CD4-positive, alpha-beta T cell (primary cell): ENCODE measurements at regions of chr2 and their contacts with region 1.

Region 1: GRCh38 chr2:73385595-73386341 is at the start of gene ALMS1:
- DNase-seq: peak; percentile 73 to 97 (median 86)
- ATAC-seq: peak; percentile 90
- H3K4me3 ChIP-seq: peak within 1 kb of the TSS; percentile 78
- H3K4me3 Mint-ChIP-seq: peak within 1 kb of the TSS; percentile 92
- H3K27ac ChIP-seq: peak within 1 kb of the TSS; percentile 75 to 78
- H3K27ac Mint-ChIP-seq: peak within 1 kb of the TSS; percentile 97
- H3K4me1 ChIP-seq: peaks cover 20% of the 10 kb centered on the region
- H3K4me1 Mint-ChIP-seq: peaks cover 45% of the 10 kb centered on the region
- H3K27me3 ChIP-seq: no peaks in the 10 kb centered on the region
- H3K27me3 Mint-ChIP-seq: no peaks in the 10 kb centered on the region
- CTCF ChIP-seq: no peak
- total RNA-seq, gene ALMS1: 20.2 to 20.6 TPM

Region 2: GRCh38 chr2:73112913-73113633 is 272.7 kb before region 1 on chr2 and contains the start of gene RAB11FIP5:
- CTCF ChIA-PET with region 1: no interaction called
- POLR2A ChIA-PET with region 1: no interaction called
- intact Hi-C with region 1: loop called in 1 of 2 experiments (anchors 5 kb)
- DNase-seq: peak; percentile 58 to 93 (median 75)
- ATAC-seq: peak; percentile 90
- H3K4me3 ChIP-seq: peak within 1 kb of the TSS; percentile 84
- H3K4me3 Mint-ChIP-seq: peak within 1 kb of the TSS; percentile 86
- H3K27ac ChIP-seq: peak within 1 kb of the TSS in 1 of 2 donors; percentile 21
- H3K27ac Mint-ChIP-seq: peak within 1 kb of the TSS; percentile 65
- H3K4me1 ChIP-seq: peaks cover 35% of the 10 kb centered on the region
- H3K4me1 Mint-ChIP-seq: peaks cover 27% of the 10 kb centered on the region
- H3K27me3 ChIP-seq: no peaks in the 10 kb centered on the region
- H3K27me3 Mint-ChIP-seq: no peaks in the 10 kb centered on the region
- CTCF ChIP-seq: no peak
- total RNA-seq, gene RAB11FIP5: 12.6 to 13.8 TPM

Region 3: DNA sequence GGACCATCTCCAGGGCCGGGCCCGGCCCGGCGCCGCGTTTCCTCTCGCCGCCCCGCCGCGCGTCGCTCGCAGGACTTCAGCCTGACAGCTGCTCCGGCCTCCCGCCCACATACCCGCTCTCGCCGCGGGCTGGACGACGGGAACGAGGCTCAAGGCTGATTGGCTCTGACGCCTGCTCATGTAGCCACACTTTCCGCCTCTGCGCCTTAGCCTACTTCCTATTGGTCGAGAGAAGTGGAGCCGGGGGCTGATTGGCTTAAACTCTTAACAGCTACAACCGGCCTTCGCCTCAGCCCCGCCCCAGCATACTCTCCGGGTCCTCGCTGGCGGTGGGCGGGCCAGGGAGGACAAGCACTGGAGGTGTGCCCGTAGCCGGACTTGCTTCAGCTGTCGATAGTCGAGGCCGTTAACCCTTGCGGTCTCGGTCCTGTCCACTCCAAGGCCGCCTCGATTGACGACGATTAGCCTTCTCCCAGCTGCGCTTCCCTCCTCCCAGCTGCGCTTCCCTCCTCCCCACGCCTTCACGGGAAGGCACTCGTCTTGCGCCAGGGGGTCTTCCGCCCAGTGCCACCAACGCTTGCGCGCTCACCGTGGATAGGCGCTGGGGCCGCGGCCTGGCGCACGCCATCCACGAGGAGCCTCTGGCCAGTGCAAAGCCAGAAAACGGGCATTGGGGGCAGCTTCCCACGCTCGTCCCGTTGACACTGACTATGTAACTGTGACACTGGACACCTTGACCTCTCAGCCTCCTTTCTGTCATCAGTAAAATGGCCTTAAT is 152.4 kb before region 1 on chr2 and contains the start of gene PRADC1:
- CTCF ChIA-PET with region 1: interaction called, 3 read pairs
- POLR2A ChIA-PET with region 1: interaction called, 37 read pairs
- intact Hi-C with region 1: loop called (anchors 1 to 10 kb)
- DNase-seq: peak; percentile 84 to 98 (median 90)
- ATAC-seq: peak; percentile 77
- H3K4me3 ChIP-seq: peak within 1 kb of the TSS; percentile 98
- H3K4me3 Mint-ChIP-seq: peak within 1 kb of the TSS; percentile 96
- H3K27ac ChIP-seq: peak within 1 kb of the TSS; percentile 82 to 90
- H3K27ac Mint-ChIP-seq: peak within 1 kb of the TSS; percentile 98
- H3K4me1 ChIP-seq: peaks cover 39% of the 10 kb centered on the region
- H3K4me1 Mint-ChIP-seq: peaks cover 50% of the 10 kb centered on the region
- H3K27me3 ChIP-seq: no peaks in the 10 kb centered on the region
- H3K27me3 Mint-ChIP-seq: no peaks in the 10 kb centered on the region
- CTCF ChIP-seq: no peak
- total RNA-seq, gene PRADC1: 2.9 to 3.0 TPM

Region 4: GRCh38 chr2:73337828-73338227 is 47.9 kb before region 1 on chr2:
- CTCF ChIA-PET with region 1: no interaction called
- POLR2A ChIA-PET with region 1: no interaction called
- intact Hi-C with region 1: no loop called
- DNase-seq: no peak
- ATAC-seq: no peak
- H3K4me3 ChIP-seq: no peak overlapping the region
- H3K4me3 Mint-ChIP-seq: no peak overlapping the region
- H3K27ac ChIP-seq: no peak overlapping the region
- H3K27ac Mint-ChIP-seq: no peak overlapping the region
- H3K4me1 ChIP-seq: no peaks in the 10 kb centered on the region
- H3K4me1 Mint-ChIP-seq: no peaks in the 10 kb centered on the region
- H3K27me3 ChIP-seq: peaks cover 0 to 3% of the 10 kb centered on the region in 2 experiments
- H3K27me3 Mint-ChIP-seq: peaks cover 8% of the 10 kb centered on the region
- CTCF ChIP-seq: no peak

Region 5: DNA sequence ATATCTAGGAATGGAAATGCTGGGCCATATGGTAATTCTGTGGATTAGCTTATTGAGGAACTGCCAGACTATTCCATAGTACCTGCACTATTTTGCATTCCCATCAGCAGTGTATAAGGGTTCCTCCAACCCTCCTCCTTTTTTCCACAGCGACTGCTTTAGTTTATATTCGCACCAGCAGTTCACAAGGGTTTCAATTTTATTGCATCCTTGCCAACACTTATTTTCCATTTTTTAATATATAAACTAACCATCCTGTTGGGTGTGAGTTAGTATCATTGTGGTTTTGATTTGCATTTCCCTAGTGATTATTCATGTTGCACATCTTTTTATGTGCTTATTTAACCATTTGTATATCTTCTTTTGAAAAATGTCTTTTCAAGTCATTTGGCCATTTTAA is 189.5 kb after region 1 on chr2:
- CTCF ChIA-PET with region 1: no interaction called
- POLR2A ChIA-PET with region 1: no interaction called
- intact Hi-C with region 1: no loop called
- DNase-seq: no peak
- ATAC-seq: no peak
- H3K4me3 ChIP-seq: no peak overlapping the region
- H3K4me3 Mint-ChIP-seq: no peak overlapping the region
- H3K27ac ChIP-seq: no peak overlapping the region
- H3K27ac Mint-ChIP-seq: no peak overlapping the region
- H3K4me1 ChIP-seq: no peaks in the 10 kb centered on the region
- H3K4me1 Mint-ChIP-seq: no peaks in the 10 kb centered on the region
- H3K27me3 ChIP-seq: no peaks in the 10 kb centered on the region
- H3K27me3 Mint-ChIP-seq: no peaks in the 10 kb centered on the region
- CTCF ChIP-seq: no peak

Region 6: DNA sequence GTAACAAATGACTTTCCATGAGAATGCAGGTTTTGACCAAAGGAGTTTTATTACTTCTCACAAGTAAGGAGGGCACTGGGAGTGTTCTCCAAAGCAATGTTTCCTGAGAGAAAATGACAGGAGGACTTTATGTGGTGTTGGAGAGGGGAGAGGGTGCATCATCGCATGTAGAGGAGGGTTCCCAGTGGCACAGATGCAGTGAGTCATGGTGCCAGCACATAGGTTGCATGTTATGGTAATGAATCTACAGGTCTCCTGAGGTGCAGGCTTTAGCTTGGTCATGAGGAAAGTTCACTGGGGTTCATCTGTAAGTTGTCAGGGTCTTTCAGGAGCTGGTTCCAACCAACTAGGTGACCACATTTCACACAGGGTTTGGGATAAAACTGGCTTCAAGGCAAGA is 226.1 kb after region 1 on chr2:
- CTCF ChIA-PET with region 1: no interaction called
- POLR2A ChIA-PET with region 1: no interaction called
- intact Hi-C with region 1: no loop called
- DNase-seq: no peak
- ATAC-seq: no peak
- H3K4me3 ChIP-seq: no peak overlapping the region
- H3K4me3 Mint-ChIP-seq: no peak overlapping the region
- H3K27ac ChIP-seq: no peak overlapping the region
- H3K27ac Mint-ChIP-seq: no peak overlapping the region
- H3K4me1 ChIP-seq: no peaks in the 10 kb centered on the region
- H3K4me1 Mint-ChIP-seq: no peaks in the 10 kb centered on the region
- H3K27me3 ChIP-seq: no peaks in the 10 kb centered on the region
- H3K27me3 Mint-ChIP-seq: no peaks in the 10 kb centered on the region
- CTCF ChIP-seq: no peak

Region 7: GRCh38 chr2:73736855-73737779 is 351.3 kb after region 1 on chr2 and contains the start of gene TPRKB:
- CTCF ChIA-PET with region 1: no interaction called
- POLR2A ChIA-PET with region 1: interaction called, 3 read pairs
- intact Hi-C with region 1: loop called in 1 of 2 experiments (anchors 5 kb)
- DNase-seq: peak; percentile 85 to 98 (median 93)
- ATAC-seq: peak; percentile 93
- H3K4me3 ChIP-seq: peak within 1 kb of the TSS; percentile 91
- H3K4me3 Mint-ChIP-seq: peak within 1 kb of the TSS; percentile 91
- H3K27ac ChIP-seq: peak within 1 kb of the TSS; percentile 55 to 62
- H3K27ac Mint-ChIP-seq: peak within 1 kb of the TSS; percentile 76
- H3K4me1 ChIP-seq: peaks cover 15% of the 10 kb centered on the region
- H3K4me1 Mint-ChIP-seq: peaks cover 20% of the 10 kb centered on the region
- H3K27me3 ChIP-seq: no peaks in the 10 kb centered on the region
- H3K27me3 Mint-ChIP-seq: no peaks in the 10 kb centered on the region
- CTCF ChIP-seq: no peak
- total RNA-seq, gene TPRKB: 16.1 to 18.2 TPM

Region 8: GRCh38 chr2:74845217-74846011 is 1459.6 kb after region 1 on chr2:
- CTCF ChIA-PET with region 1: no interaction called
- POLR2A ChIA-PET with region 1: no interaction called
- intact Hi-C with region 1: loop called in 1 of 2 experiments (anchors 10 kb)
- DNase-seq: peak in 10 of 14 experiments; percentile 13 to 79 (median 42)
- ATAC-seq: no peak
- H3K4me3 ChIP-seq: peak overlapping the region; percentile 5
- H3K4me3 Mint-ChIP-seq: peak overlapping the region; percentile 84
- H3K27ac ChIP-seq: no peak overlapping the region
- H3K27ac Mint-ChIP-seq: peak overlapping the region; percentile 98
- H3K4me1 ChIP-seq: peaks cover 96% of the 10 kb centered on the region
- H3K4me1 Mint-ChIP-seq: peaks cover 99% of the 10 kb centered on the region
- H3K27me3 ChIP-seq: no peaks in the 10 kb centered on the region
- H3K27me3 Mint-ChIP-seq: no peaks in the 10 kb centered on the region
- CTCF ChIP-seq: no peak